PC-9 (cell line): ENCODE measurements at regions of chr2 and their contacts with region 1.

Region 1: DNA sequence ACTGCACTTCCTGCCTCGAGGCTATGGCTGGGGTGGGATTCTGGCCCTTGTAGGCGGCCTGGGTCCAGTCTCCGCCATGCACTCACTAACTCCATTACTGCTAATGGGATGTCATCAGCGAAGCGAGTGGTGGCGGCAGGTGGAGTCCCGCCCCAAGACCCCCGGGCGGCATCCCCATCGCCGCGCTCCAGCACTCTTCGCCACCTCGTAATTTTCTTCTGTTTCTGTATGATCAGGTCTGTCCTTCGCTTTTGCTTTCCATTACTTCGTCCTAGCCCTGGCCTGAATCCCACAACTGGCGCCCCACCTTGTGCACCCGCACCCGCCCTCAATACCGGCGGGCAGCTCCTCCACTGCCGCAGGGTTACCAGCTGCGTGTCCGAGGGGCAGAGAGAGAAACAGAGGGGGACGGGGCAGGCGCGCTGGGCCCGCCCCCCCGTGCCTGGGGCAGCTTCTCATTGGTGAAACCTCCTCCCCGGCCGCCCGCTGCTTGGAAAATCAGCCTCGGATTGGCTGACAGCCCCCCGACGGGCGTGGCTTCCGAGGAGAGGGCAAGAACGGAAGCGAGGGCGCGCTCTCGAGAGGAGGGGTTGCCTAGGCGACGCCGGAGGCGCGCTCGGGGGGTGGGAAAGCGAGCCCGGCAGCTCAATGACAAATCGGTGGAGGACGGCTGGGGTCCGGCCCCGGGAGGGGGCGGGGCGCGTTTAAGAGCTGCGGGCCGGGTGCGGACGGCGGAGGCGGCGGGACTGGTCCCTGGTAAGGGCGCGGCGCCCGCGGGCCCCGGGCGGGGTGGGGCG is at the start of gene RALB:
- DNase-seq: peak; percentile 98 to 100
- H3K4me3 ChIP-seq: peak within 1 kb of the TSS; percentile 80
- H3K27ac ChIP-seq: peak within 1 kb of the TSS; percentile 53
- H3K4me1 ChIP-seq: peaks cover 42% of the 10 kb centered on the region
- H3K27me3 ChIP-seq: no peaks in the 10 kb centered on the region
- CTCF ChIP-seq: no peak
- total RNA-seq, gene RALB: 74.2 and 86.6 TPM in 2 replicates

Region 2: GRCh38 chr2:119549241-119549640 is 703.2 kb before region 1 on chr2:
- CTCF ChIA-PET with region 1: no interaction called
- POLR2A ChIA-PET with region 1: no interaction called
- intact Hi-C with region 1: no loop called
- DNase-seq: no peak
- H3K4me3 ChIP-seq: no peak overlapping the region
- H3K27ac ChIP-seq: no peak overlapping the region
- H3K4me1 ChIP-seq: no peaks in the 10 kb centered on the region
- H3K27me3 ChIP-seq: peaks cover 42% of the 10 kb centered on the region
- CTCF ChIP-seq: no peak

Region 3: DNA sequence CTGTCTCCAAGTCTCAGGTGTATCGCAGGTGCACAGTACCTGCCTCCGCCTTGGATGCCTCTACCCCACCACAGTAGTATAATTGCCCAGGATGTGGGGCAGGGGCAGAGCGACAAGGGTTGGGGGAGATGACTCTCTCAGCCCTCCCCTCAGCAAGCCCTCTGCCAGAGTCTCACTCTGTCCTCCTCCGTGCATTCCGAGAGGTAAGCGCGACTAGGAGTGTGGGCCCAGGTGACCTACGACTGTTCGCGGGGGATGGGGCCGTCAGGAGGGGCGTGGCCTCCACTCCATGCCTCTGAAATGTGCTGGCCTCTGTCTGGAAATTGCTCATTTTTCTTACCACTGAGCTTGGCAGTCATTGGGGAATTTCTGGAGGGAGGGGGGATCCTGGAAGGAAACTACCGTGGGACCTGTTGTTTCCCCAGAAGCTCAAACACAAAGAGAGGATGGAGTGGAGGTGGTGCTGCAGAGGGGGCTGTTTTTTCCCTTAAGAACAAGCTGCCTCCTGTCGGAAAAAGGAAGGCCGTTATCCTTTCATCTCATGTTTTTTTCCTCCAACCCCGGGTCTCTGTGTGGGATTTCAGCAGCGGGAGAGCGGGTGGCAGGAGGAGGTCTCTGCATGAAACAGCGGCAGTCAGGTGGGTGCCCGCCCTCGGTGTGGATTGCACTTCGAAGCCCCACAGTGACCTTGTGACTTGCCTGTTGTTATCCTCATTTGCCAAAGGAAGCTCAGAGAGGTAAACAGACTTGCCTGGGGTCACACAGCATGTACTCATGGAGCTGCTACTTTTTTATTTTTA is 12.7 kb before region 1 on chr2:
- CTCF ChIA-PET with region 1: interaction called, 3 read pairs
- POLR2A ChIA-PET with region 1: interaction called, 23 read pairs
- intact Hi-C with region 1: loop called (anchors 2 kb)
- DNase-seq: peak; percentile 90 to 92
- H3K4me3 ChIP-seq: peak overlapping the region; percentile 41; the same call in 1 of the 2 replicates
- H3K27ac ChIP-seq: peak overlapping the region; percentile 95
- H3K4me1 ChIP-seq: peaks cover 87% of the 10 kb centered on the region
- H3K27me3 ChIP-seq: no peaks in the 10 kb centered on the region
- CTCF ChIP-seq: no peak